CD8-positive, alpha-beta T cell (primary cell): ENCODE measurements at regions of chr12 and their contacts with region 1.

Region 1: GRCh38 chr12:112992541-112993398 is 14.5 kb downstream of the OAS2 start:
- DNase-seq: peak; percentile 25 to 70 (median 46)
- ATAC-seq: peak; percentile 79
- H3K4me3 ChIP-seq: no peak overlapping the region
- H3K4me3 Mint-ChIP-seq: no peak overlapping the region
- H3K27ac ChIP-seq: no peak overlapping the region
- H3K27ac Mint-ChIP-seq: no peak overlapping the region
- H3K4me1 ChIP-seq: peaks cover 9% of the 10 kb centered on the region
- H3K4me1 Mint-ChIP-seq: peaks cover 11% of the 10 kb centered on the region
- H3K27me3 ChIP-seq: no peaks in the 10 kb centered on the region
- H3K27me3 Mint-ChIP-seq: no peaks in the 10 kb centered on the region
- CTCF ChIP-seq: peak; percentile 74

Region 2: GRCh38 chr12:113005754-113006153 is 13.0 kb after region 1 on chr12:
- CTCF ChIA-PET with region 1: interaction called, 13 read pairs
- POLR2A ChIA-PET with region 1: no interaction called
- intact Hi-C with region 1: no loop called
- DNase-seq: no peak
- ATAC-seq: no peak
- H3K4me3 ChIP-seq: no peak overlapping the region
- H3K4me3 Mint-ChIP-seq: no peak overlapping the region
- H3K27ac ChIP-seq: no peak overlapping the region
- H3K27ac Mint-ChIP-seq: no peak overlapping the region
- H3K4me1 ChIP-seq: no peaks in the 10 kb centered on the region
- H3K4me1 Mint-ChIP-seq: no peaks in the 10 kb centered on the region
- H3K27me3 ChIP-seq: no peaks in the 10 kb centered on the region
- H3K27me3 Mint-ChIP-seq: no peaks in the 10 kb centered on the region
- CTCF ChIP-seq: no peak

Region 3: DNA sequence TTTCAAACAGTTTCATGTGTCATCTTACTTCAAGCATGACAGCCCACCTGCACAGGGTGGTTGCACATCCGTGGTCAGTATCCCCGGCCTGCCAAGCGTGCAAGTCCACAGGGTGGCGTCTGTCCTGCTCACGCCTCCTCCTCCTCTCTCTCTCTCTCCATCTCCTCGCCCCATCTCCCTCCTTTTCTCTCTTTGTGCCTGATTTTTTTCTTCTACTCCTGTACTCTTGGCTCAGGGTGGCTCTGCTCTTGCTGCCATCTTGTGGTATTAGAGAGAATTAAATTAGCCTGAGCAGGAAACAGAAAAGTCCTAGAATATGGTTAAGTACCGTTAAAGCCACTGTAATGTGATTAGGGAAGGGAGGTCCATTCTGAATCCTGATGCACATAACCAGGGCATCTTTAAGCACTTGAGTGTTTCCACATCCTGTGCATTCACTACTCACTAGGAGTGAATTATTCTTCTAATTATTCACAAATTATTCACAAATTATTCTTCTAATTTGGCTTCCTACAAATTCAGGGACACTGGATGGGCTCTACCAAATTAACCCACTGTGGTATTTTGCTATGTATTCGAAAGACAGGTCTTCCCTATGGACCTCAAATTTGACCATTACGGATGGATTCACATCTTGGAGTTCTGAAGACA is 38.2 kb after region 1 on chr12:
- CTCF ChIA-PET with region 1: interaction called, 4 read pairs
- POLR2A ChIA-PET with region 1: no interaction called
- intact Hi-C with region 1: loop called in 1 of 2 experiments (anchors 2 kb)
- DNase-seq: peak in 2 of 9 experiments; percentile 36 to 48
- ATAC-seq: no peak
- H3K4me3 ChIP-seq: no peak overlapping the region
- H3K4me3 Mint-ChIP-seq: no peak overlapping the region
- H3K27ac ChIP-seq: no peak overlapping the region
- H3K27ac Mint-ChIP-seq: no peak overlapping the region
- H3K4me1 ChIP-seq: no peaks in the 10 kb centered on the region
- H3K4me1 Mint-ChIP-seq: peaks cover 3% of the 10 kb centered on the region
- H3K27me3 ChIP-seq: no peaks in the 10 kb centered on the region
- H3K27me3 Mint-ChIP-seq: peaks cover 10% of the 10 kb centered on the region
- CTCF ChIP-seq: peak; percentile 44

Region 4: DNA sequence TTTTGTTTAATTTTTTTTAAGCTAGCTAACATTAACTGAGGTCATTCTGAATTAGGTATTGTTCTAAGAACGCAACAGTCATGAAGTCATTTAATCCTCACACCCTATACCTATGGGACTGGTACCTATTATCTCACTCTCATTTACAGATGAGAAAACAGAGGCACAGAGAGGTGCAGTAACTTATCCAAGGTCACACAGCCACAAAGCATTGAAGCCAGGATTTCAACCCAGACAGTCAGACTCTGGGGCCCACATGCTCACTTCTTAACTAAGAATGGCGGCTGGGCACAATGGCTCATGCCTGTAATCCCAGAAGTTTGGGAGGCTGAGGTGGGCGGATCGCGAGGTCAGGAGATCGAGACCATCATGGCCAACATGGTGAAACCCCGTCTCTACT is 48.8 kb after region 1 on chr12:
- CTCF ChIA-PET with region 1: no interaction called
- POLR2A ChIA-PET with region 1: no interaction called
- intact Hi-C with region 1: no loop called
- DNase-seq: no peak
- ATAC-seq: no peak
- H3K4me3 ChIP-seq: no peak overlapping the region
- H3K4me3 Mint-ChIP-seq: no peak overlapping the region
- H3K27ac ChIP-seq: no peak overlapping the region
- H3K27ac Mint-ChIP-seq: no peak overlapping the region
- H3K4me1 ChIP-seq: no peaks in the 10 kb centered on the region
- H3K4me1 Mint-ChIP-seq: no peaks in the 10 kb centered on the region
- H3K27me3 ChIP-seq: no peaks in the 10 kb centered on the region
- H3K27me3 Mint-ChIP-seq: peaks cover 4% of the 10 kb centered on the region
- CTCF ChIP-seq: no peak

Region 5: GRCh38 chr12:113103756-113104450 is 111.1 kb after region 1 on chr12:
- CTCF ChIA-PET with region 1: interaction called, 4 read pairs
- POLR2A ChIA-PET with region 1: no interaction called
- intact Hi-C with region 1: loop called in 1 of 2 experiments (anchors 5 kb)
- DNase-seq: peak; percentile 37 to 83 (median 60)
- ATAC-seq: peak; percentile 90
- H3K4me3 ChIP-seq: peak overlapping the region; percentile 43 to 56
- H3K4me3 Mint-ChIP-seq: peak overlapping the region; percentile 84
- H3K27ac ChIP-seq: peak overlapping the region in 1 of 2 experiments; percentile 50
- H3K27ac Mint-ChIP-seq: peak overlapping the region; percentile 79
- H3K4me1 ChIP-seq: no peaks in the 10 kb centered on the region
- H3K4me1 Mint-ChIP-seq: peaks cover 8% of the 10 kb centered on the region
- H3K27me3 ChIP-seq: no peaks in the 10 kb centered on the region
- H3K27me3 Mint-ChIP-seq: no peaks in the 10 kb centered on the region
- CTCF ChIP-seq: no peak